ENCODE measurements at regions of chr20 and their contacts with region 1.

Region 1: DNA sequence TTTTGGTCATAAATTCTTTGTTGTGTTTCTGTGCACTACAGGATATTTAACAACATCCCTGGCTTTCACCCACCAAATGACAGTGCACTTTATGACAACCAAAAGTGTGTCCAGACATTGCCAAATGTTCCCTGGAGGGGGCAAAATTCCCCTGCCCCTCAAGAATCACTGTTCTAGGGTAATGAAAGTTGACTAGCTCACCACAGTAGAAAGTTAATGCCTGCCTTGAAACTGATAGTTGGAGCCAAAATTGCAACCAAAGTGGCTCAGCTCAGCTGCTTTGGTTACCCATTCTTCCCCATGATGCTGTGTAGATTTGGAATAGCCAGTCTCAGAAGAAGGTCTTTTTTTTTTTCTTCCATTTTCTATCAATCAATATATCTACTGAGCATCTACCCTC is 150.6 kb downstream of the RALGAPA2 start:
- DNase-seq: no peak
- ATAC-seq: no peak
- H3K4me3 ChIP-seq: no peak overlapping the region
- H3K27ac ChIP-seq: no peak overlapping the region
- H3K4me1 ChIP-seq: no peaks in the 10 kb centered on the region
- H3K27me3 ChIP-seq: no peaks in the 10 kb centered on the region

Region 2: DNA sequence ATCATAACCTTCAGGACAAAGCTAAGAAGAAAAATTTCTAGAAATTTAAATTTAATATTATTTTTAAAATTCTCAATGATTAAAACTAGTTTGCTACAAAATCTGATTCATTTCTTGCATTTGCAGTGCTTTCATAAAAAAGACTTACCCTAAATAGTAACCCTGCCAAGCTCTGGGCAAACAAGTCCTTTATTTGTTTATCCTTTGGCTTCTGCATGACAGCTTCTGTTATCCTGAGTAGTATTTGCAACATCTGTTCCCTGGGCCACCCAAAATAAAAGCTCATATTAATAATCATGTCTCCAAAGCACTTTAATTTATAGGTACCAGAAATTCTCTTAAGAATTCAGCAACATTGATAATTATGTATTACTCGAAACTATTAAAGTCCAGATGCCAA is 49.3 kb after region 1 on chr20:
- intact Hi-C with region 1: no loop called
- DNase-seq: no peak
- ATAC-seq: no peak
- H3K4me3 ChIP-seq: no peak overlapping the region
- H3K27ac ChIP-seq: no peak overlapping the region
- H3K4me1 ChIP-seq: no peaks in the 10 kb centered on the region
- H3K27me3 ChIP-seq: no peaks in the 10 kb centered on the region

Region 3: GRCh38 chr20:20979934-20980333 is 418.1 kb after region 1 on chr20:
- intact Hi-C with region 1: loop called in 1 of 2 experiments (anchors 5 kb)
- DNase-seq: no peak
- ATAC-seq: no peak
- H3K4me3 ChIP-seq: no peak overlapping the region
- H3K27ac ChIP-seq: no peak overlapping the region
- H3K4me1 ChIP-seq: no peaks in the 10 kb centered on the region
- H3K27me3 ChIP-seq: no peaks in the 10 kb centered on the region